ENCODE measurements at regions of chr9 and their contacts with region 1.

Region 1: GRCh38 chr9:92790542-92791527 is 26.2 kb upstream of the BICD2 start:
- DNase-seq: peak; percentile 67 to 79
- ATAC-seq: peak; percentile 91 to 97 (median 94)
- H3K4me3 ChIP-seq: peak overlapping the region in 2 of 10 donors; percentile 13 to 23
- H3K27ac ChIP-seq: no peak overlapping the region
- H3K4me1 ChIP-seq: peaks cover 0 to 8% (median 0%) of the 10 kb centered on the region in 9 donors
- H3K27me3 ChIP-seq: peaks cover 0 to 14% (median 4%) of the 10 kb centered on the region in 7 donors
- CTCF ChIP-seq: peak; percentile 72 to 91 (median 87)

Region 2: GRCh38 chr9:92133949-92134604 is 656.8 kb before region 1 on chr9:
- intact Hi-C with region 1: loop called in 4 of 10 experiments (anchors 5 to 10 kb)
- DNase-seq: peak; percentile 72 to 81
- ATAC-seq: peak; percentile 48 to 86 (median 76)
- H3K4me3 ChIP-seq: peak overlapping the region in 3 of 10 donors; percentile 14 to 34 (median 16)
- H3K27ac ChIP-seq: no peak overlapping the region
- H3K4me1 ChIP-seq: peaks cover 0 to 9% (median 7%) of the 10 kb centered on the region in 9 donors
- H3K27me3 ChIP-seq: peaks cover 0 to 22% (median 0%) of the 10 kb centered on the region in 7 donors
- CTCF ChIP-seq: peak; percentile 81 to 99 (median 95)

Region 3: DNA sequence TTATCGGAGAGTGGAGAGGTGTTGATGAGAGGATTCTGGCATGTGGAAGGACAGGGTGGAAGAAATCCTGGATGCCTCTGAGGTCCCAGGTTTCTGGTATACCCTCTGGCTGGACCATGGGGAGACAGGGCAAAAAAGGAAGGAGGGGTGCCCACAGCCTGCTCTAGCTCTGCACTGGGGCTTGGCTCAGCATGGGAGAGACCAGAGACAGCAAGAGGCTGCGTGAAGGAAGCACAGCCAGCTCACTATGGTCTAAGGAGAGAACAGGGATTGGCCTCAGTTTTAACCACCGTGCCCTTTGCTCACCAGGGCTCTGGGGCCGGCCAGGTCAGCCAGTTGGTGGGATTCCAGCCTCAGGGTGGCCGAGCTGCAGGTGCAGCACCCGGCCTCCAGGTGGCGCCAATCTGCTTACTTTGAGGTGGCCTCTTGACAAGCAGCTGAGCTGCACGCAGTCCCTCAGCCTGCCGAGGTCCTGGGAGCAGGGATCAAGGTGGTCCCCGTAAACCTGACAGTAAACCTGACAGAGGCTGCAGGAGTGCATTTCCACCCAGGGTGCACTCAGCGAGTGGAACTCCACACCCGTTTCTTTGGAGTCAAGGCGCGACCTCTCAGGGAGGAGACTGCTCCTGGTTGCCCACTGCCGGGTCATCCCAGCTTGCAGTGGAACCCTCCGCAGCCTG is 650.6 kb before region 1 on chr9:
- intact Hi-C with region 1: loop called in 4 of 10 experiments (anchors 5 to 10 kb)
- DNase-seq: peak; percentile 66 to 78
- ATAC-seq: peak; percentile 57 to 85 (median 65)
- H3K4me3 ChIP-seq: peak overlapping the region in 9 of 10 donors; percentile 4 to 53 (median 48)
- H3K27ac ChIP-seq: no peak overlapping the region
- H3K4me1 ChIP-seq: peaks cover 0 to 16% (median 11%) of the 10 kb centered on the region in 9 donors
- H3K27me3 ChIP-seq: peaks cover 0 to 28% (median 14%) of the 10 kb centered on the region in 7 donors
- CTCF ChIP-seq: peak; percentile 74 to 96 (median 90)

Region 4: GRCh38 chr9:92669890-92670708 is 120.7 kb before region 1 on chr9 and contains the start of gene IPPK:
- intact Hi-C with region 1: loop called in 1 of 10 experiments (anchors 5 kb)
- DNase-seq: peak; percentile 98
- ATAC-seq: peak; percentile 94 to 98 (median 97)
- H3K4me3 ChIP-seq: peak within 1 kb of the TSS; percentile 66 to 98 (median 81)
- H3K27ac ChIP-seq: peak within 1 kb of the TSS; percentile 72 to 98 (median 92)
- H3K4me1 ChIP-seq: peaks cover 4 to 52% (median 40%) of the 10 kb centered on the region in 9 donors
- H3K27me3 ChIP-seq: no peaks in the 10 kb centered on the region
- CTCF ChIP-seq: no peak
- total RNA-seq, gene IPPK: 6.5 to 17.8 (median 8.5) TPM

Region 5: GRCh38 chr9:92716557-92716956 is 74.3 kb before region 1 on chr9:
- intact Hi-C with region 1: loop called (anchors 1 to 5 kb)
- DNase-seq: peak; percentile 72 to 76
- ATAC-seq: peak; percentile 26 to 73 (median 54)
- H3K4me3 ChIP-seq: no peak overlapping the region
- H3K27ac ChIP-seq: peak overlapping the region in 7 of 10 donors; percentile 30 to 79 (median 57)
- H3K4me1 ChIP-seq: peaks cover 6 to 33% (median 22%) of the 10 kb centered on the region in 9 donors
- H3K27me3 ChIP-seq: no peaks in the 10 kb centered on the region
- CTCF ChIP-seq: peak; percentile 76 to 98 (median 94)

Region 6: DNA sequence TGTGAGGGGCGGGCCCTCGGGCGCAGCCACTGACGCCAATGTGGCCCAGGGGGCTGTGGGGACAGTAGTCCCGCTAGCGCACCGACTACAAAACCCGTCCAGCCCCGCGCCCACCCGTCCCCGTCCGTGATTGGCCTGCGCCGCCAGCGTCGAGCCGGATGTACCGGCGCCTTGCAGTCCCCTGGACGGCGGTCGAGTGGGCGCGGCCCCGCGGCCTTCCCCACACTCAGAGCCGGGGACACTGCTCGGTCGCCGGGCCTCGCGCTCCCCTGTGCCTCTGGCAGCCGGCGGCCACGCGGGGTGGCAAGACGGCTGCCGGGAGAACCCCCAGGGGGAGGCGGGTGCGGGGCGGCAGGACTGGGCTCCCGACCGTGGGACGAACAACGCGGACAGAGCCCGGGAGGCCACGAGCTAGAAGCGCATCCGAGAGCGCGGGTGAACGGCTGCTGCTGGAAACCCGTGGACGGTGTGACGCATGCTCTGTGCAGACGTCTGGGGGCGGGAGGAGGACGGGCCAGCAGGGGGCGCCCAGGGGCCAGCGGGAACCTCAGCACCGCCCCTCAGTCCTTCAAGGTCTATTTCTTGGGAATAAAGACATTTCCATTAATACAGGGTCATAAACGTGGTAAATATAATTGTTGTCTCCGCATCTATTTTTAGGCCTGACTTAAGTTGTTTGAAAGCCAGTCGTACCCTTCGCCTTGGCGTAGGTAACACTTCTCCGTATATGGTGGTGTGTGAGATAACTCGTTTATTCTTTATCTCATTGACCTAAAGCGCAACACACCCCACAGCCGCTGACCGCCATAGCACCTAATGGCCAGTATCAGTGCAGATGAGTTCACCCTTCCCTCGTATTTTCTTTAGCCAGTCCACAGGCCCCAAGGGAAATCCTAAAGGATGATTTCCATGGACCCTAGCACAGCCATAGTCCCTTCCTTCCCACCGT is 25.6 kb before region 1 on chr9:
- intact Hi-C with region 1: loop called in 1 of 10 experiments (anchors 2 kb)
- DNase-seq: peak; percentile 98 to 99
- ATAC-seq: peak; percentile 95 to 98 (median 97)
- H3K4me3 ChIP-seq: peak overlapping the region; percentile 50 to 100 (median 82)
- H3K27ac ChIP-seq: peak overlapping the region; percentile 96 to 100 (median 98)
- H3K4me1 ChIP-seq: peaks cover 14 to 67% (median 54%) of the 10 kb centered on the region in 9 donors
- H3K27me3 ChIP-seq: no peaks in the 10 kb centered on the region
- CTCF ChIP-seq: peak; percentile 95 to 99 (median 97)

Region 7: DNA sequence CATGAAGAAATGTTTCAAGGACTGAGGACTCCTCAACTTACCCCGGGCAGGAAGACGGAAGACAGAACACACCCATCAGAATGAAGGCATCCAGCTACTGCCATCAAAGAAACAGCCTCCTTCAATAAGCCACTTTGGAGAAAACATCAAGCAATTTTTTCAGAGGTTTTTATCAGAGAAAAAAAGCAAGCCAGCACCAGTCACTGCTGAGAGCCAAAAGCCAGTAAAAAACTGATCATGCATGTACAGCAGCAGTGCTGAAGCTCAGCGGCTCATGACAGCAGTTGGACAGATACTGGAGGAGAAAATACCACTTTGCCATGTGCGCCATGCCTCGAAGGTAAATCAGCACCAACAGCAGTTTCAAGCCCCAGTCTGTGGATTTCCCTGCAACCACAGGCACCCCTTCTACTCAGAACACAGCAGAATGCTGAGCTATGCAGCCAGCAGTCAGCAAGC is 97.1 kb after region 1 on chr9:
- intact Hi-C with region 1: no loop called
- DNase-seq: no peak
- ATAC-seq: no peak
- H3K4me3 ChIP-seq: no peak overlapping the region
- H3K27ac ChIP-seq: no peak overlapping the region
- H3K4me1 ChIP-seq: no peaks in the 10 kb centered on the region
- H3K27me3 ChIP-seq: no peaks in the 10 kb centered on the region
- CTCF ChIP-seq: no peak

Measured in heart right ventricle (tissue), 16 donors.